Activated T-helper 2 cell treated with anti-CD3 and anti-CD28 coated beads, Interferon-gamma antibody, Interleukin-2, Interleukin-4, amounts not matched to agents 10 μg/mL and 5 μg/mL and 100 μg/mL, durations not matched to agents 14 hours and 24 hours and 36 hours (primary cell): ENCODE measurements at regions of chr2 and their contacts with region 1.

Region 1: DNA sequence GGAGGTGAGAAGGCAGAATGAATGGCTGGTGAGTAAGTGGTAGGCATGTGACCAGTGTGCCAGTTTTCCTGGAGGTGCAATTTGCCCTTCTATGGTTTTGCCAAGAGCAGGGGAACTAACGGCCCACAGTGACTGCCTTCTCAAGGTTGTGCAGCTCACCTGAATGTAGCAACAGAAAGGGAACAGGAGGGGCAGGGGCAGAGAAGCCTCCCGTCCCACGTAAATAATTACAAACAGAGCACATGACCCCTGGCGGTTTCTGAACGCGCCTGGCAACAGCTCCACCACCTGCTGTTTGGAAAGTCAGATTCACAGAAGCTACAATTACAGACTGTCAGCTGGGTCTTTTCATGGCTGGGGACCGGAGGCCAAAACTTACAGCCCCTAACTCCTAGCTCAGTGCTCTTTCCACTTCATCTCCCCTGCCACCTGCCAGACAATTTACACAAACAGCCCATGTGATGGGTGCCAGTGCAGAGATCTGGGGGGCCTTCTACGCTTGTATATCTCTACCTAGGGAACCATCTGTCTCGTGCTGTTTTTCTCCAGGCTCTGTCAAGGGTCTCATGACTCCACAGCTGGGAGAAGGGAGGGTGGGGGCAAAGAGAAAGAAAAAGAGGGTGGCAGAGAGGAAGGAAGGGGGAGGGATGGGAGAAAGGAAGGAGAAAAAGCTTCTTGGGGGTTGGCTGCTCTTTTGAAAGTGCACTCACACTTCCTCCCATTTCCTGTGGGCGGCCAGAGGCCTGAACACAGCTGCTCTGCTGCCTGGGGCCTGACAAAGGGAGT is 69.6 kb downstream of the POLR1A start:
- DNase-seq: peak; percentile 61
- H3K4me3 Mint-ChIP-seq: peak overlapping the region; percentile 65
- H3K27ac Mint-ChIP-seq: peak overlapping the region; percentile 98
- H3K4me1 Mint-ChIP-seq: peaks cover 60% of the 10 kb centered on the region
- H3K27me3 Mint-ChIP-seq: no peaks in the 10 kb centered on the region

Region 2: GRCh38 chr2:85826990-85827878 is 208.8 kb before region 1 on chr2:
- intact Hi-C with region 1: loop called (anchors 1 kb)
- DNase-seq: peak; percentile 75
- H3K4me3 Mint-ChIP-seq: no peak overlapping the region
- H3K27ac Mint-ChIP-seq: no peak overlapping the region
- H3K4me1 Mint-ChIP-seq: peaks cover 32% of the 10 kb centered on the region
- H3K27me3 Mint-ChIP-seq: peaks cover 29% of the 10 kb centered on the region

Region 3: DNA sequence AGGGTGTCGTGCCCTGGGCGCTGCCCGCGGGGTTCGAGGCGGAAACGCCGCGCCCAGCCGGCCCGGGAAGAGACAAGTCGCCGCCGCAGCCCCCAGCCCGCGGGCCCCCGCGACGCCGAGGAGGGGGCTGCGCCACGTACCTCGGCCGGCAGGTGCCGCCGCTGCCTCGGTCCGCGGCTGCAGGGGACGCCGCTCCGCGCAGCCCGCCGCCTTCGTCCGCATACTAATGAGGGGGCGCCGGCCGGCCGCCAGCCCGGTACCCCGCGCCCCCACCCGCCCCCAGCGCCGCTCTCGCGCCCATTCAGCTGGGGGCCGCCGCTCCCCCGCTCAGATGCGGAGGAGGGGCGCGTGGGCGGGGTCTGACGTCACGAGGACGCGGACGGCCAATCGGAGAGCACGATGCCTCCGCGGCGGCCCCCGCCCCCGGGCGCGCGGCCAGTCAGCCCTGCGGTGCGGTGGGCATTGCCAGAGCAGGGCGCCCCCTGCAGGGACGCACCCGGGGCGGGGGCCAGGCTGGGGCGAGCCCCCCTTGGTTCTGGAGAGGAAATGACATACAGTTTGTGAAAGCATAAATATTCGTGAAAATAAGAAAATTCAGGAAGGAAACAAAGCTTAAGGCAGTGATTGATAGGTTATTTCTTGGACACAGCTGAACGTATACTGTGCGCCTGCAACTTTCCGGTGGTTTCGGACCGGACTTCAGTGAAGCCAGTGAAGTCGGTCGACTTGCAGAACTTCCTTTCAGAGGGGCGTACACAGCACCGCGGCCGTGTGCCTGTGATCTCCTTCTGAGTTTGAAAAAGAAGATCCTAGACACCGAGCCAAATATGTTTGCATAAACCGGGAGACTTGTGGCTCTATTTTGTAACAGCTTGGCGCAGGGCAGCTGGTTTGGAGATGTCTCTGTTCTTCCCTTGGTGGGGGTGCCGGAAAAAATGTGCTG is 147.1 kb before region 1 on chr2 and contains the start of gene ST3GAL5:
- intact Hi-C with region 1: loop called (anchors 1 kb)
- DNase-seq: peak; percentile 89
- H3K4me3 Mint-ChIP-seq: peak within 1 kb of the TSS; percentile 82
- H3K27ac Mint-ChIP-seq: peak within 1 kb of the TSS; percentile 71
- H3K4me1 Mint-ChIP-seq: peaks cover 54% of the 10 kb centered on the region
- H3K27me3 Mint-ChIP-seq: peaks cover 4% of the 10 kb centered on the region
- total RNA-seq, gene ST3GAL5: 13.8 and 15.7 TPM in 2 replicates

Region 4: DNA sequence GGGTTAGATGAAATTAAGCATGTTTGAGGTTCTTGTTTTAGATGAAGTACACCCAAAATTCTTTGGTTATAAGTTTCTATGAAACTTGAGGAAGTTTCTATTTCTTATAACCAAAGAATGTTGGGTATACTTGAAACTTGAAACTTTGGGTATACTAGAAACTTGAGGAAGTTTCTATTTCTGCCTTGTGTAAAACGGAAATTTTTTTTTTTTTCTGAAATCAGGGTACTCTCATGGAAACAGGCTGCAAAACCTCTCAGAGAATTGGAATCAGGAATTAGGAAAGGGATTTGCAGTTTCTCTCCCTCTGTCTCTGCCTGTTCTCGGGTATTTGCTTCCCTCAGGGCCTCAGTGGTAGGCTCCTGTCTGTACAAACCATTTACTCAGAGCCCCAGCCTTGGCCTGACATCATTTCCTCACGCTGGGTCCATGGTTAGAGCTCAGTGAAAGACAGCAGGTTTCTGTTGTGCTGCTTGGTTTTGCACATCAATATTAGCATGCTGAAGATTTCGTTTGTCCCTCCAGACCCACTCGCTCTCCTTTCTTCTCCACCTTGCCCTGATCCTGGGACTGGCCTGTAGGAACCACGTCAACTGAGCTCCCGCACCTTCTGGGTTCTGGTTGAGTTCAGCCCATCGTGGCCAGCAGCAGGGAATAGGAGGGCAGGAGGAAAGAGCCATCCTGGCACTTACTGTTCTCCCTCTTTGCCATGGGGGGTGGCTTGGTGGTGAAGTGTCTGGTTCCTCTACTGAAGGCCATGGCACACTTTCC is 36.8 kb before region 1 on chr2:
- intact Hi-C with region 1: loop called (anchors 1 kb)
- DNase-seq: peak; percentile 58
- H3K4me3 Mint-ChIP-seq: peak overlapping the region; percentile 20
- H3K27ac Mint-ChIP-seq: peak overlapping the region; percentile 77
- H3K4me1 Mint-ChIP-seq: peaks cover 68% of the 10 kb centered on the region
- H3K27me3 Mint-ChIP-seq: no peaks in the 10 kb centered on the region

Region 5: DNA sequence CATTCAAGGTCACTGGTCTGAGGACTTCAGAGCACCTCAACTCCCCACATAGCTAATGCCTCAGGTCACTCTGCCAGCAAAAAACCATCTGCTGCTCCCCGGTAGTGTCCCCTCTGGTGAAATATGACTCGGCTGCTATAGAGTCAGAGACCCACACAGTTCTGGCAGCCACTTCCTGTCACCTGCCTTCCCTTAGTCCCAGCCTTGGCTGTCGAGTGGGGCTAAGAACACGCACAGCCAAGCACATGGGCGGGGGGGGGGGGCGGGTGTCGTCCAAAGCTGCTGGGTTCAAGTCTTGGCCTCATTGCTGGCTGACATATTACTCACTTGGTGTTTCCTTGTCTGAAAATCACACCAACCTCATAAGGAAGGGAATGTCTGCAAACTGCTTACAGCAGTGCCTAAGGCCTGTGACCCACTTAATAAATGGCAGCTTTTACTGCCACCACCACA is 32.1 kb after region 1 on chr2:
- intact Hi-C with region 1: loop called (anchors 2 kb)
- DNase-seq: no peak
- H3K4me3 Mint-ChIP-seq: no peak overlapping the region
- H3K27ac Mint-ChIP-seq: peak overlapping the region; percentile 29
- H3K4me1 Mint-ChIP-seq: peaks cover 22% of the 10 kb centered on the region
- H3K27me3 Mint-ChIP-seq: no peaks in the 10 kb centered on the region

Region 6: GRCh38 chr2:86195055-86195807 is 159.2 kb after region 1 on chr2 and contains the start of gene IMMT:
- intact Hi-C with region 1: loop called (anchors 5 kb)
- DNase-seq: peak; percentile 91
- H3K4me3 Mint-ChIP-seq: peak within 1 kb of the TSS; percentile 96
- H3K27ac Mint-ChIP-seq: peak within 1 kb of the TSS; percentile 89
- H3K4me1 Mint-ChIP-seq: peaks cover 43% of the 10 kb centered on the region
- H3K27me3 Mint-ChIP-seq: no peaks in the 10 kb centered on the region
- total RNA-seq, gene IMMT: 160 and 180 TPM in 2 replicates